ENCODE measurements at regions of chr19 and their contacts with region 1.

Region 1: DNA sequence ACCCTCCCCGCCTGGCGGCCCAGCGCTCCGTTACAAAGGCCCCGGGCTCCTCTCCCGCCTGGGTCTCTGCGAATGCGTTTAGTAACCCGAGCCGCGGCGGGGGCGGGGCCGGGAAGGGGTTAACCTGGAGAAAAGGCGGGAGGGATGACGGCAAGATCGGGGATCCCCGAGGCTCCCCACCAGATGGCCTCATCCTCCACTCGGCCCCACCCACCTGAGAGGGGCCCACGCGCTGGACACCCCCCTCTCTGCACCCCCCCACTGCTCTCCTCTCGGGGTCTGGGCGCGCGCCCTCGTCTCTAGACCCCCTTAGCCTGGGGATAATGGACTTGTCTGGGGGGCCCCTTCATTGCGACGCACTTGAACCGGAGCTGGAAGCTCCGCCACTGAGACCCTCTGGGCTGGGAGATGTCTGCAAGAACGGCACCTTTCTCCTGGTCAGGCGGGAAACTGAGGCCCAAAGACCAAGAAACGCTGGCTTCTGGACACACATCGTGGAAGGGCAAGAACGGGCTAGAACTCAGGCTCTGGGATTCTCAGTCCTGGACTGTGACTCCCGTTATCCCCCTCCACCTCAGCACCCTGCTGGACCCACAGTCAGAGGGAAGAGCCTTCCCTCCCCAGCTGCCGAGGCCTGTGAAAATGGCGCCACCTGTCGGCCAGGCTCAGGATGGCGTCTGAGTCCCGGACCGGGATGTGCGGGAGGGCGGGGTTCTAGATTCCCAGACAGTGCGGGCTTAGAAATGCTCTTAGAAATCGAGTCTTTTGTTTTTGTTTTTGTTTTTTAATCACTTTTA is 2.9 kb upstream of the LTBP4 start:
- DNase-seq: peak; percentile 70
- H3K4me3 ChIP-seq: no peak overlapping the region
- H3K27ac ChIP-seq: no peak overlapping the region
- H3K4me1 ChIP-seq: peaks cover 38% of the 10 kb centered on the region
- H3K27me3 ChIP-seq: no peaks in the 10 kb centered on the region
- CTCF ChIP-seq: peak; percentile 98 to 99

Region 2: DNA sequence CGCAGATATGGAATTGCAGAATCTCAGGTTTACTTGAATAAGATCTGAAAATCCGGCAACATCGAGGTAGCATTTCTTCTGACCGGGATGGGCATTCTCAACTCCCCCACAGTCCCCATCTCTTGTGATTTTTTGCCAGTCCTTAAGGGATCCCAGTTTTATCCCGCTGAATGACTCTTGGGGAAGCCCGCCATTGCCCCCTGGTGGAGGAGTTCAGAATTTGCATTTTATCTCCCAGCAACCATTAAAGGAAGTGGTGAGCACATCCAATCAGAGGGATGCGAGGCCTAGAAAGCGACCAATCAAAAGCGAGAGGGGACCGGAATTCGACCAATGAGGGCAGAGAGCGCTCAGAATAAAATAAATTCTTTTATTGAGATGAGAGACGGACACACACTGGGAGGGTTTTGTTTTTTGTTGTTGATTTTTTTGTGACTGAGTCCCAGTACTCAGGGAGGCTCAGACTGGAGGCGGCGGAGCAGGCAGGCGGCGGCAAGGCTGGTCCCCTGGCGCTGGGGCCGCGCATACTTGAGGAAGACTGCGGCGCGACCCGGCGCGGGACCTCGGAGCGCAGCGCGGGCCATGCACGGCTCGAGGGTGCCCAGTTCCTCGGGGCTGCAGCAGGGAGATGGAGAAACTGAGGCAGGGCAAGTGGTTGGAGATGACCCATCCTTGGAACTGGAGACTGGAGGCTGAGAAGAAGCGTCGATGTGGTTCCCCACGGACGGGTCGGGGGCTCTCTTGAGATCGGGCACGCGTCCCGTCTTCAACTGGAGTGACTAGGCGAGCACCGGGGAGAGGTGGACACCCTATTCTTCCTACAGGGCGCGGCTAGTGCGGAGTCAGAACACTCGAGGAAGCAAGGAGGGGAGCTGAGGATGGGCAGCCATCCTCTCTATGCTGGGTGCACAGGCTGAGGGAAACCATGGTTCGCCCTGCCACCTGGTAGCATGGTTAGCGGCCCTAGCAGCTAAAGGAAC is 376.2 kb before region 1 on chr19:
- CTCF ChIA-PET with region 1: no interaction called
- dilution Hi-C with region 1: no loop called
- in situ Hi-C with region 1: no loop called
- intact Hi-C with region 1: loop called (anchors 10 kb)
- DNase-seq: peak; percentile 78
- H3K4me3 ChIP-seq: no peak overlapping the region
- H3K27ac ChIP-seq: no peak overlapping the region
- H3K4me1 ChIP-seq: peaks cover 26% of the 10 kb centered on the region
- H3K27me3 ChIP-seq: no peaks in the 10 kb centered on the region
- CTCF ChIP-seq: peak; percentile 75 to 85

Region 3: GRCh38 chr19:40444192-40445028 is 153.9 kb before region 1 on chr19 and contains the start of gene SERTAD3:
- CTCF ChIA-PET with region 1: no interaction called
- dilution Hi-C with region 1: no loop called
- in situ Hi-C with region 1: no loop called
- intact Hi-C with region 1: loop called (anchors 1 kb)
- DNase-seq: peak; percentile 94
- H3K4me3 ChIP-seq: peak within 1 kb of the TSS; percentile 92 to 100 (median 95)
- H3K27ac ChIP-seq: peak within 1 kb of the TSS; percentile 95
- H3K4me1 ChIP-seq: peaks cover 35% of the 10 kb centered on the region
- H3K27me3 ChIP-seq: no peaks in the 10 kb centered on the region
- CTCF ChIP-seq: peak in 1 of 2 donors; percentile 7
- total RNA-seq, gene SERTAD3: 34.3 to 35.8 TPM

Region 4: GRCh38 chr19:40542202-40542859 is 56.0 kb before region 1 on chr19:
- CTCF ChIA-PET with region 1: no interaction called
- dilution Hi-C with region 1: loop called (anchors 5 kb)
- in situ Hi-C with region 1: no loop called
- intact Hi-C with region 1: loop called (anchors 1 kb)
- DNase-seq: no peak
- H3K4me3 ChIP-seq: no peak overlapping the region
- H3K27ac ChIP-seq: no peak overlapping the region
- H3K4me1 ChIP-seq: no peaks in the 10 kb centered on the region
- H3K27me3 ChIP-seq: no peaks in the 10 kb centered on the region
- CTCF ChIP-seq: no peak

Region 5: GRCh38 chr19:40570313-40571004 is 27.9 kb before region 1 on chr19:
- CTCF ChIA-PET with region 1: no interaction called
- dilution Hi-C with region 1: no loop called
- in situ Hi-C with region 1: no loop called
- intact Hi-C with region 1: loop called (anchors 2 kb)
- DNase-seq: peak; percentile 98
- H3K4me3 ChIP-seq: peak overlapping the region; percentile 48 to 75 (median 59)
- H3K27ac ChIP-seq: peak overlapping the region; percentile 77
- H3K4me1 ChIP-seq: peaks cover 19% of the 10 kb centered on the region
- H3K27me3 ChIP-seq: peaks cover 3% of the 10 kb centered on the region
- CTCF ChIP-seq: peak; percentile 20 to 54